Activated CD8-positive, alpha-beta T cell treated with anti-CD3 and anti-CD28 coated beads, Interleukin-2, amount 10 ng/mL, durations not matched to agents 7 days and 5 days (primary cell): ENCODE measurements at regions of chr19 and their contacts with region 1.

Region 1: DNA sequence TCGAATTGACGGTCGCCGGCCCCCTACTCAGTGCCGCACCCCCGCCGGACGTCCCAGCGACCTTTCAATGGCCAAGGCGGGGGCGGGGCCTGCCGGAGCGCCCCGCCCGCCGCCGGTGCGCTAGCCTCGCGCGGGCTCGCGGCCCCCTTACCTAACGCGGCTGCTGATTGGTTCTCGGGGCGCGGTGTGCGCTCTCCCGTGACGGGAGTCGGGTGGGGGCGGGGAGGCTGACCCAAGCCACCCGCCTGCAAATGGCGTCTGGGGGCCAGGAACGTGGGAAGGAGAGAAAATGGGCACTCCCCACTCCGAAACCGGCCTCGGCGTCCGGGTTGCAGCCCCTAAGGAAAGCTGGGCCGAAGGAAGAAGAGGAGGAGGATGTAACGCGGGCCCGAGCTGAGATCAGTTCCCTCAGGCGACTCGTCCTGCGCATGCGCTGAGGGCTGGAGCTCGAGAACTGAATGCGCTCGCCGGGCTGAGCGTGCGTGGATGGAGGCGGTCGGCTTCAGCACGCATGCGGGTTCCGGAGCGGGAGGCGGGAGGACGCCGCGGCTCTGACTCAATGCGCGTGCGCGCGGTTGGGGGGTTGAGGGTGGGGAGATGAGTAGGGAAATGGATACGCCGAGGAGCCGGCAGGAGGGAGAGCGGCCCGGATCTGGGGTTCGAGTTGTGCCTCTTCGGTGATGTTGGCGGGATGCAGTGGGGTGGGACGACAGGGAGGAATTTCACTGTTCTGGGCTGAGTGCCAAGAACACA is at the start of gene SMG9:
- DNase-seq: peak; percentile 98
- ATAC-seq: peak; percentile 89
- H3K4me3 Mint-ChIP-seq: peak within 1 kb of the TSS; percentile 98
- H3K27ac Mint-ChIP-seq: peak within 1 kb of the TSS; percentile 99
- H3K4me1 Mint-ChIP-seq: peaks cover 50% of the 10 kb centered on the region
- H3K27me3 Mint-ChIP-seq: no peaks in the 10 kb centered on the region
- total RNA-seq, gene SMG9: 60.0 to 65.1 TPM

Region 2: DNA sequence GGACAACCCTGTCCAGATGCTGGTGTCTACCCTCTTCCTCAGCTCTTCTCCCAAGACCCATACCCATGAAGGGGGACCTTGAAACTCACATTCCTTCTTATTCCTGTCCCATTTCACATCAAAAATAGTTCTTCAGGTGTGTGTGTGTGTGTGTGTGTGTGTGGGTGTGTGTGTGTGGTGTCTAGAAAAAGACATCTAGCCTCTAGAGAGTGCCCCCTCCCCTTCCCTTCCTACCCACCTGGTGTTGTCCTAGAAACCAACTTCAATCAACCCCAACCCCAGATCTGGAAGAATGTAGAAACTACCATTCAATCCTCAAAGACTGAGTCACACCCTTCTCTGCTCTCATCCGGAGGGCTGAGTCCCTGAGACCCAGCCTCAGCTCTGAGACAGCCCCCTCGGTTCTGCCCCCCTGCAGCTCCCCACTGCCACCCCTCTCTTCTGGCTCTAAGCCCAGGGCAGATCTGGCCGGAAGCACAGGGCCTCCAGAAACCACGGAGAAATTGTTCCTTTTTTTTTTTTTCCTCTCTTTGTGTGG is 22.6 kb after region 1 on chr19:
- CTCF ChIA-PET with region 1: interaction called, 13 read pairs
- POLR2A ChIA-PET with region 1: interaction called, 52 read pairs
- DNase-seq: peak; percentile 37
- ATAC-seq: peak; percentile 28
- H3K4me3 Mint-ChIP-seq: peak overlapping the region; percentile 61
- H3K27ac Mint-ChIP-seq: peak overlapping the region; percentile 91
- H3K4me1 Mint-ChIP-seq: peaks cover 55% of the 10 kb centered on the region
- H3K27me3 Mint-ChIP-seq: no peaks in the 10 kb centered on the region

Region 3: GRCh38 chr19:43784981-43785808 is 30.5 kb after region 1 on chr19:
- CTCF ChIA-PET with region 1: interaction called, 13 read pairs
- POLR2A ChIA-PET with region 1: interaction called, 52 read pairs
- DNase-seq: peak; percentile 75
- ATAC-seq: peak; percentile 55
- H3K4me3 Mint-ChIP-seq: peak overlapping the region; percentile 16
- H3K27ac Mint-ChIP-seq: peak overlapping the region; percentile 89
- H3K4me1 Mint-ChIP-seq: peaks cover 43% of the 10 kb centered on the region
- H3K27me3 Mint-ChIP-seq: no peaks in the 10 kb centered on the region